Sciatic nerve (tissue), 2 donors: ENCODE measurements at regions of chr3 and their contacts with region 1.

Region 1: GRCh38 chr3:78154521-78155186 is 1114.8 kb downstream of the ROBO2 start:
- DNase-seq: no peak
- ATAC-seq: no peak

Region 2: DNA sequence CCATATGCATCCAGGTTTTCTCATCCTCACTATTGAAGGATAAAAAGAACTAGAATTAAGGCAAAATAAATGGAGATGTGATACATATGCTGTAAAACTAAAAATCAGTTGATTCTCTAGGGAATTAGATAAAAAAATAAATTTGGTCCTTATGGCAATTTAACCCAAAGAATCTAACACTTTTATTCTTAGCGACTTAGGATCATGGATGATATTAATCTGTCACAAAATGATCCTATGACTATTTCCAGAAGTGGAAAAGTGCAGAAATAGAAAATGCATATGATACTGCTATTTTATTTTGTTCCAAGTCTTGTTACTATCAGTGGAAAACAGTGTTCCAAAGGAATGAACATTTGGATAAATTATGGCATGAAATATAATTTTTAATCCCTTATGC is 368.4 kb before region 1 on chr3:
- intact Hi-C with region 1: loop called (anchors 5 kb)
- DNase-seq: no peak
- ATAC-seq: no peak